CD14-positive monocyte (primary cell): ENCODE measurements at regions of chr5 and their contacts with region 1.

Region 1: DNA sequence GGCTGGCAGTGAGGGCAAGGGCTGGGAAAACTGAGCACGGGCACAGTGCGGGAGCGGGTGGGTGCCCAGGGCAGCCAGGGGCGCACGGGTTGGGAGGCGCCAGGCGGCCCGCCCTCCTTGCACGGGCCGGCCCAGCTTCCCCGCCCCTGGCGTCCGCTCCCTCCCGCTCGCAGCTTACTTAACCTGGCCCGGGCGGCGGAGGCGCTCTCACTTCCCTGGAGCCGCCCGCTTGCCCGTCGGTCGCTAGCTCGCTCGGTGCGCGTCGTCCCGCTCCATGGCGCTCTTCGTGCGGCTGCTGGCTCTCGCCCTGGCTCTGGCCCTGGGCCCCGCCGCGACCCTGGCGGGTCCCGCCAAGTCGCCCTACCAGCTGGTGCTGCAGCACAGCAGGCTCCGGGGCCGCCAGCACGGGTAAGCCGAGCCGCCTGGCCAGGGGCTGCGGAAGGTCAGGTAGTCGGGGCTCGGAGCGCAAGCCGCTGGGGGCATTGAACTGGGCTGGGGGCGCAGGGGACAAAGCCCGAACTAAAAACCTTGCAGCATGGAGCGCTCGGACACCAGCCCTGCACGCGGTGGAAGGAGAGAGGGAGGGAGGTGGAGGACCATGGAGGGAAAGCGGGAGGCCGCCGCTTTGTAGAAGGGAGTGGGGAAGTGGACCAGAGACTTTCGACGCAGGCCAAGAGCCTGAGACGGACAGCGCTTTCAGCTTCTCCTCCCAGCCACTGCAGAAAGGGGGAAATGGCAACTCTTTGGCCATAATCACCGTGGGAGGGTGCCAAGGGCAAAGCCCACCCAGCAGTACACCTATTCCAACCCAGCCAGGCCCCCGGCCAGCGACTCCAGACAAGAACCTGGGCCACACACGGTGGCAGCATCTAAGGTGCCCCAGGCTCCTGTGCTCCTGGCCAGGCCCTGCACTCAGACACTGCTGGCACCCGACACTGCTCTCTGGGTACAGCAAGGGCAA is at the start of gene TGFBI:
- DNase-seq: peak; percentile 63 to 71 (median 69)
- H3K4me3 ChIP-seq: peak within 1 kb of the TSS; percentile 78 to 90 (median 84)
- H3K4me3 Mint-ChIP-seq: peak within 1 kb of the TSS; percentile 90 to 97
- H3K27ac ChIP-seq: peak within 1 kb of the TSS; percentile 66 to 80
- H3K27ac Mint-ChIP-seq: peak within 1 kb of the TSS; percentile 75 to 94 (median 84)
- H3K4me1 ChIP-seq: peaks cover 66 to 77% of the 10 kb centered on the region in 2 donors
- H3K4me1 Mint-ChIP-seq: peaks cover 82% of the 10 kb centered on the region
- H3K27me3 ChIP-seq: no peaks in the 10 kb centered on the region
- H3K27me3 Mint-ChIP-seq: peaks cover 5 to 13% (median 10%) of the 10 kb centered on the region in 3 donors
- CTCF ChIP-seq: no peak
- polyA plus RNA-seq, gene TGFBI: 480 to 653 (median 565) TPM

Region 2: DNA sequence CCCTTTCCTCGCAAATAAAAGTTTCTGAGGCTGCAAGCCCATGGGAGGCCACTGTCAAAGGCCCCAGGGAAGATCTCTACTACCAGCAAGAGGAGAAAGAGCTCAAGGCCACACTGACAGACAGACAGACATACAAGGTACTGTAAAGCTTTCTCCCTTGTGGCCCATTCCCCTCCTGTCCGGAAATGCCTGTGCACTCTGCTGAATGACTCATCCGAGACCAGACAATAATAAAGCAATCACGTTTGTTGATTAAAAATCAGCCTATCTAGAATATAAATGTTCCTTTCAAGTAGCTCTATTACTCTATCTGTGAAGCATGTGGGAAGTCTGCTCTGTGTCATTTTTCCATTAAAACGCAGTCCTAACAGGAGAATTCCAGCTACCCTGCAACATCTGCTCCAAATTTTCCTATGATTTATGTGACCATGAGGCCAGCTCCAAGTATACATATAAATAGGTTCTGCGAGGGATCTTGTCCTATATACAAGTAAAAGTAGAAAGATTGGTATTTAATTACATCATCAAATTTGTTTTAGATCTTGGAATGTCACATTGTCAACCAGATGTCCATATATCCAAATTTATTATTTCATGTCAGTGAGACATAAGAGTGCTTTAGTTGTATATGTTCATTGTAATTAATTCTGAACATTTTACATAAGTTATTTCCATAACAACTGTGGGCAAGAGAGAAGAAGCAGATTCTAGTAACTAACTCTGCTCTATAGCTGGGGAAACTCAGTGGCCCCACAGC is 35.0 kb before region 1 on chr5:
- intact Hi-C with region 1: loop called (anchors 5 kb)
- DNase-seq: no peak
- H3K4me3 ChIP-seq: no peak overlapping the region
- H3K4me3 Mint-ChIP-seq: no peak overlapping the region
- H3K27ac ChIP-seq: no peak overlapping the region
- H3K27ac Mint-ChIP-seq: no peak overlapping the region
- H3K4me1 ChIP-seq: peaks cover 21 to 40% of the 10 kb centered on the region in 2 donors
- H3K4me1 Mint-ChIP-seq: peaks cover 34% of the 10 kb centered on the region
- H3K27me3 ChIP-seq: no peaks in the 10 kb centered on the region
- H3K27me3 Mint-ChIP-seq: peaks cover 3 to 21% (median 7%) of the 10 kb centered on the region in 3 donors
- CTCF ChIP-seq: no peak

Region 3: GRCh38 chr5:135999406-136000139 is 29.5 kb before region 1 on chr5:
- intact Hi-C with region 1: loop called (anchors 5 kb)
- DNase-seq: peak; percentile 90 to 93 (median 91)
- H3K4me3 ChIP-seq: peak overlapping the region in 1 of 3 experiments; percentile 66
- H3K4me3 Mint-ChIP-seq: peak overlapping the region in 1 of 2 donors; percentile 60
- H3K27ac ChIP-seq: peak overlapping the region; percentile 73 to 88
- H3K27ac Mint-ChIP-seq: peak overlapping the region; percentile 93 to 97 (median 96)
- H3K4me1 ChIP-seq: peaks cover 49 to 65% of the 10 kb centered on the region in 2 donors
- H3K4me1 Mint-ChIP-seq: peaks cover 61% of the 10 kb centered on the region
- H3K27me3 ChIP-seq: no peaks in the 10 kb centered on the region
- H3K27me3 Mint-ChIP-seq: peaks cover 3 to 16% (median 6%) of the 10 kb centered on the region in 3 donors
- CTCF ChIP-seq: no peak